GM12878 (cell line): ENCODE measurements at regions of chr1 and their contacts with region 1.

Region 1: DNA sequence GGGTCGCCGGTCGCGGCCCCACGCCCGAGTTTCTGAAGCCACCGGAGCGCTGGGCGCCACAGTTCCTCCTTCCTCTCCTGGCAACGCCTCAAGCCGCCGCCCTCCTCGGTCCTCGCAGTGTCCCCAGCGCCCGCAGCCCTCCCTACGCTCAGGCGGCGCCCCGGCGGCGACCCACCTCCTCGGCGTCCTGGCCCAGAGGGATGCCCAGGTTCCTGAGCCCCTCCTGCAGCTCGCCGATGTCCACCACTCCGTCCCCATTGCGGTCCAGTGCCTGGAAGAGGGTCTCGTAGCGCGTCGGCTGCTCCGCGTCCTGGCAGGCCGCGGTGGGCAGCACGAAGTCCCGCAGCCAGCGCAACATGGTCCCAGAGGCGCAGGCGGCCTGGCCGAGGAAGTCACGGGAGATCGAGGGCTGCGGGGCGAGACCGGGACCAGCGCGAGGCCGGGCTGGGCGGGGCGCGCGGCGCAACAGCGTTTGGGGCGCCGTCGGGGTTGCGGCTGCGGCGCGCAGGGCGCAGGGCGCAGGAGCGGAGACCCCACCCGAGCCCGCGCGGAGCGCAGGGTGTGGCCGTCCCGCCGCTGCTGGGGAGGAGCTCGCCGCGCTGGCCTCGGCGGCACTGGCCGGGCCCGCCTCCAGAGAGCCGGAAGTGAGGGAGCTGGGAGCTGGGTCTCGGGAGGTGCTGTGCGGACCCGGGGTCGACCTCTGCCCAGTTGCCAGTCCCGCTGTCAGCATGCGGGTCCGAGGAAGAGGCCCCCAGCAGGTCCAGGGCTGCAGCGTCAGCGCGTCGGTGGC is at the start of gene SLC25A24:
- DNase-seq: no peak
- ATAC-seq: peak; percentile 97
- H3K4me3 ChIP-seq: peak within 1 kb of the TSS; percentile 74
- H3K27ac ChIP-seq: no peak within 1 kb of the TSS
- H3K4me1 ChIP-seq: no peaks in the 10 kb centered on the region
- H3K27me3 ChIP-seq: peaks cover 0 to 7% of the 10 kb centered on the region in 2 experiments; a peak in 2 of 4 replicates
- CTCF ChIP-seq: no peak
- EP300 ChIP-seq: no peak
- POLR2A ChIP-seq: peak; percentile 58
- RAD21 ChIP-seq: no peak
- polyA plus RNA-seq, gene SLC25A24: 4.0 to 6.3 TPM

Region 2: DNA sequence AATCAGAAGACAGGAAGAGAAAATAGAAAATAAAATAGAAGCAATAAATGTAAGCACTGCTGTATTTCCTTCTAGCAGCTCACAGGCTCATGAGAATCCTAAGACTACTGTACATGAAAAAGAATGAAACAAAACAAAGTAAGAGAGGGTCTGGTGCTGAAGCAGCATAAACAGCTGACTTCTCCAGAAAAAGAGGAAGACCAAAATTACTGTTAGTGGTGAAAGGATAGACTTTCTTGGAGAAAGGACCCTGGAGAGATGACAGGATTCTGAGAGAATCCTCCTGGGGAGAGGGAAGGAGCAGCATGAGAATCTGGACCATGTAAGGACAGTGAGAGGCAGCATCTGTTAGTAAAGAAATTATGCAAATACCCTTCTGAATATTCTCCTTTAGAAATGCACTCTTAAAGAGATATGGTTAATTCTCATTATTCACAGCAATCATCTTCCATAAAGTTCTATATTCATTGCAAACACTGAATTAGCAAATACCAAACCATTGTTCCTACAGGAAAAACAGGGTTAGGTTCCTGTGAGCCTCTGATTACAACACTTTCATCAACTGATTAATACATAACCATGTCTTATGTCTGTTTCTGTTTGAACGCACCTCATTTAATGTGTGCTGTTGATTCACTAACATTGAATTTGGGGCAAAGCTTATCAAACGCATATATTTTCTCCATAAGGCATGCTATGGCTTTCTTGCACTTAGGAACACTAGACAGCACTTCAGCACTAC is 16.8 kb before region 1 on chr1:
- CTCF ChIA-PET with region 1: interaction called, 5 read pairs
- POLR2A ChIA-PET with region 1: no interaction called
- RAD21 ChIA-PET with region 1: no interaction called
- SMC1A ChIA-PET with region 1: interaction called, 14 read pairs
- in situ Hi-C with region 1: no loop called
- intact Hi-C with region 1: no loop called
- DNase-seq: no peak
- ATAC-seq: no peak
- H3K4me3 ChIP-seq: no peak overlapping the region
- H3K27ac ChIP-seq: no peak overlapping the region
- H3K4me1 ChIP-seq: no peaks in the 10 kb centered on the region
- H3K27me3 ChIP-seq: no peaks in the 10 kb centered on the region
- CTCF ChIP-seq: no peak
- EP300 ChIP-seq: no peak
- POLR2A ChIP-seq: no peak
- RAD21 ChIP-seq: no peak